ENCODE measurements at regions of chrX and their contacts with region 1.

Region 1: GRCh38 chrX:70096052-70096451 is 33.8 kb downstream of the OTUD6A start:
- DNase-seq: no peak
- H3K4me3 ChIP-seq: no peak overlapping the region
- H3K27ac ChIP-seq: no peak overlapping the region
- H3K4me1 ChIP-seq: no peaks in the 10 kb centered on the region
- H3K27me3 ChIP-seq: peaks cover 14% of the 10 kb centered on the region
- CTCF ChIP-seq: no peak

Region 2: GRCh38 chrX:69493193-69493592 is 602.9 kb before region 1 on chrX:
- CTCF ChIA-PET with region 1: no interaction called
- POLR2A ChIA-PET with region 1: no interaction called
- intact Hi-C with region 1: loop called (anchors 2 kb)
- DNase-seq: peak in 1 of 2 experiments; percentile 21
- H3K4me3 ChIP-seq: no peak overlapping the region
- H3K27ac ChIP-seq: no peak overlapping the region
- H3K4me1 ChIP-seq: no peaks in the 10 kb centered on the region
- H3K27me3 ChIP-seq: no peaks in the 10 kb centered on the region
- CTCF ChIP-seq: peak; percentile 65

Region 3: DNA sequence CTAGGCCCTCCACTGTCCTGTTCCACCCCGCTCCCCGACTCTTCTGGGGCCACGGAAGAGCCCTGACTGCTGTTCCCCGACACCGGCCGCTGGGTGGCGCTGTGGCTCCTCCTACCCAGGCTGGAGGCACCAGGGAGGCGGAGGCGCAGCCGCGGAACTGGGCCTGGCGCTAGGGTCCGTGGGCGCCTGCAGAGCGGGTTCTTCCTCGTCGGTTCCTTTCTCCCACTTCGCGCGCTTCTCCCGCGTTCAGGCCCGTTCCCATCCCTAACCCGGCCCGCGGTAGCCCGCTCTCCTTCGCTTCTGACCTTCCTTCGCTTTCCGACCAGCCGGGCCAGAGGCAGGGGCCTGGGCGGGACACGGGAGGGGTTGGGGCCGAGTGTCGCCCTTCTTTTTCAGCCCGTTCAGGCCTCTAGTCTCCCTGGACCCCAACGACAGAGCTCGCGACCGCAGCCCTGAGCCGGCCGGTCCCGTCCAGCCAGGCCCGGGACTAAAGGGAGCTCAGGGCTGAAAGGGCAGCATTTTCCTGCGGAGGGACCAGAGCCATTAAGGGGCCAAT is 557.7 kb before region 1 on chrX:
- CTCF ChIA-PET with region 1: interaction called, 3 read pairs
- POLR2A ChIA-PET with region 1: no interaction called
- intact Hi-C with region 1: loop called (anchors 5 kb)
- DNase-seq: peak in 1 of 2 experiments; percentile 32
- H3K4me3 ChIP-seq: no peak overlapping the region
- H3K27ac ChIP-seq: no peak overlapping the region
- H3K4me1 ChIP-seq: no peaks in the 10 kb centered on the region
- H3K27me3 ChIP-seq: 0 out of 2 replicates have a peak, but pooled peaks cover 4% of the 10 kb centered on the region
- CTCF ChIP-seq: peak; percentile 63

Region 4: DNA sequence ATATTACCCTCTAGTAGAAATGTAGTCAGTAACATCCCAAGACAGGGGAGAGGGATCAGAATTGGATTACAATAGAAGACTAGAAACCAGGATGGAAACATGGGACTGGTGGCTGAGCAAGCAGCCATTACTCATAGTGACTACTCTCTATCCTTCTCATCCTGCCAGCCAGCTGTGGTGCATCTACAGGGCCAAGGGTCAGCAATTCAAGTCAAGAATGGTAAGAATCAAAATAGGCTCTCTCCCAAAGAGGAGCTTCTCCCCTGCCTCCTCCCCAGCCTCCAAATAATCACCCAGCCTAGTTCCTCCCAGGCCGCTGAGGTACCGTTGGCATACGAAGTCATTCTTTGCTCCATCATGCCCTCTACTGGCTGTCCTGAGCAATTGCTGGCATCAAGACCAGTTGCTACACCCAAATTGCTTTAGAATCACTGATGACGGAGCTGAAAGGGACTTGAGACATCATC is 65.7 kb before region 1 on chrX:
- CTCF ChIA-PET with region 1: no interaction called
- POLR2A ChIA-PET with region 1: no interaction called
- intact Hi-C with region 1: loop called (anchors 2 kb)
- DNase-seq: peak in 1 of 2 experiments; percentile 7
- H3K4me3 ChIP-seq: no peak overlapping the region
- H3K27ac ChIP-seq: no peak overlapping the region
- H3K4me1 ChIP-seq: no peaks in the 10 kb centered on the region
- H3K27me3 ChIP-seq: no peaks in the 10 kb centered on the region; the same call in 1 of the 2 replicates
- CTCF ChIP-seq: peak; percentile 71